Activated CD4-positive, alpha-beta T cell treated with anti-CD3 and anti-CD28 coated beads, Interleukin-2, amount 10 ng/mL, durations not matched to agents 24 days and 14 days (primary cell): ENCODE measurements at regions of chr14 and their contacts with region 1.

Region 1: DNA sequence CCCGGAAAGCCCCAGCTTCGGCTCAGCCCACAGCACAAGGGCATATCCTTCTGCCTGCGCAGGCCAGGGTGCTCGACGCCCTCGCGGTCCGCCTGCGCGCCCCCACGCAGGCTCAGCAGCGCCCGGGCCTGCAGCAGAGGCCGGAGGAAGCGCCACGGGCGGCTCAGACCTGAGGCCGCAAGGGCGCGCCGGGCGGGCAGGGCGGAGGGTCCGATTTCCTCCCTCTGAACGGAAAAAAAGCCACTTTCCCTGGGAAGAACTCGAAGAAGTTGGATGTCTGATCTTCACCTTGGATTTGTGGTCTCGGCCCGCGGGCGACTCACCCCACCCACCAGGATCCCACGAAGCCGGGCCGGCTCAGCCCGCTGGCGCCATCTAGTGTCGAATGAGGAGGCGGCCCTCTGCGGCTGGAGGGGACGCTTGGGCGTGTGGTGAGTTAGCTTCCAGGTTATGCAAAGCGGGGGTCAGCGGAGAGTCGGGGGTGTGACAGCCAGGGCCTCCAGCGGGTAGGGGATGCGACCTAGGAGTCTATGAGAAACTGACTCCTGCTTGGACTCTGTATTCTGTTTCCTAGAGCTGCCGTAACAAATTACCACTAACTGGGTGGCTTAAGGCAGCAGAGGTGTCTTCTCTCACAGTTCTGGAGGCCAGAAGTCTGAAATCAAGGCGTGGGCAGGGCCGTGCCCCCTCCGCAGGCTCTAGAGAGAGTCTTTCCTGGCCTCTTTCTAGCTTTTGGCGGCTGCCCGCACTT is 40.0 kb upstream of the SRSF5 start:
- DNase-seq: peak; percentile 96
- H3K4me3 Mint-ChIP-seq: peak overlapping the region; percentile 79
- H3K27ac Mint-ChIP-seq: peak overlapping the region; percentile 79
- H3K4me1 Mint-ChIP-seq: peaks cover 33% of the 10 kb centered on the region
- H3K27me3 Mint-ChIP-seq: peaks cover 7% of the 10 kb centered on the region

Region 2: DNA sequence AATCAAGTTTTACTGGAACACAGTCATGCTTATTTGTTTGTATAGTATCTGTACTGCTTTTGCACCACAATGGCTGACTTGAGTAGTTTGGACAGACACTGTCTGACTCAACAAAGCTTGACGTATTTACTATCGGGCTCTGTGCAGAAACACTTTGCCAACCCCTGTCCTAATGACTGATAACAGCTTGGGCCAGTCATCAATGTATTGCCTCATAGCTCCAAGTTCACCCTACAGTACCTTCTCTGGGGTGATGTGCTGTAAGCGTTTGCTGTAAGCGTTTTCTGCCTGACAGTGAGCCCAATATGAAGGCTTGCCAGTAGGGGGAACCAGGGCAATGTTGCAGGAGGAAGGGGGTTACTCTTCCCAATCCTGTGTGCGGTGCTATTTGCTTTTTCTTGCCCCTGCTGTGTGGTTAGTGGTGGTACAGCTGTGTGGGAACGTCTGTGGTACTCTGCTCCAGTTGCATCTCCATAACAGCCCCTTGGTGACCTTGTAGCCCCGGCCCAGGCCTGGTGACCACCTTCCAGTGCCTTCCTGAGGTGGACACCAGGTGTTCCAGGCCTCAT is 146.8 kb before region 1 on chr14:
- intact Hi-C with region 1: loop called (anchors 1 kb)
- DNase-seq: no peak
- H3K4me3 Mint-ChIP-seq: no peak overlapping the region
- H3K27ac Mint-ChIP-seq: no peak overlapping the region
- H3K4me1 Mint-ChIP-seq: no peaks in the 10 kb centered on the region
- H3K27me3 Mint-ChIP-seq: peaks cover 37% of the 10 kb centered on the region

Region 3: DNA sequence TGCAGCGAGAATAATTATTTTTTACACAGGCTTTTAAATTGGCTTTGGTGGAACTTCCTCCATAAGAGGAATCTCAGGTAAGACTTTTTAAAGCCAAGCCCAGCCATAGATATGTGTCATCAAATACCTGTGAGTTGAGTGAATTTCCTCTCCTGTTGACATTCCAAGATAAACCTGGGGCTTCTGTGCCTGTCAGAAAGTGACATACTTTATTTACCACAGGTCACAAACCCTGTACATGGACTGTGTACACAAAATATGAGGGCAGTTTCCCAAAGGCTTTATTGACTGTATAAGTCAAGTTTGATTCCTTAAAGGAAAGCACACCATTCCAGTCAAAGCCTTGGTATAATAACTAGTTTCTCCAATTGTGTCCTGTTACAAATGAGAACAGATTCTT is 14.1 kb after region 1 on chr14:
- intact Hi-C with region 1: no loop called
- DNase-seq: no peak
- H3K4me3 Mint-ChIP-seq: no peak overlapping the region
- H3K27ac Mint-ChIP-seq: no peak overlapping the region
- H3K4me1 Mint-ChIP-seq: no peaks in the 10 kb centered on the region
- H3K27me3 Mint-ChIP-seq: peaks cover 3% of the 10 kb centered on the region

Region 4: DNA sequence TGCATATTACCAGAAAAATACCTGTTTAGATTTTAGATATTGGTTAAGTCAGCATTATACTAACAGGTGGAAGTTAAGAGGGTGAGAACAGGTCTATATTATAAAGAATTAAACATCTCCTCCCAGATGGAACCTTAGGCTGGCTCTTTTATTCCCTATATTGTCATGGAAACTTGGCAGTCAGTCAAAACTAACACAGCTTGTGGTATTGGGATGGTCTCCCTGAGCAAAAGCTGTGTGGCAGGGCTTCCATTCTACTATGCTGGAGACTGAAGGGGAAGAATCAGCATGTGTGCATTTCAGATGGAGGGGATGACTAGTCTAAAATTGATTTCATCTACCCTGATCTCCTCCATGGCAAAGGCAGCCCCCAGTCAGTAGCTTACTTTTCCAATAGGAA is 219.0 kb after region 1 on chr14:
- intact Hi-C with region 1: no loop called
- DNase-seq: no peak
- H3K4me3 Mint-ChIP-seq: no peak overlapping the region
- H3K27ac Mint-ChIP-seq: no peak overlapping the region
- H3K4me1 Mint-ChIP-seq: no peaks in the 10 kb centered on the region
- H3K27me3 Mint-ChIP-seq: peaks cover 7% of the 10 kb centered on the region